MCF 10A (cell line): ENCODE measurements at regions of chr2 and their contacts with region 1.

Region 1: DNA sequence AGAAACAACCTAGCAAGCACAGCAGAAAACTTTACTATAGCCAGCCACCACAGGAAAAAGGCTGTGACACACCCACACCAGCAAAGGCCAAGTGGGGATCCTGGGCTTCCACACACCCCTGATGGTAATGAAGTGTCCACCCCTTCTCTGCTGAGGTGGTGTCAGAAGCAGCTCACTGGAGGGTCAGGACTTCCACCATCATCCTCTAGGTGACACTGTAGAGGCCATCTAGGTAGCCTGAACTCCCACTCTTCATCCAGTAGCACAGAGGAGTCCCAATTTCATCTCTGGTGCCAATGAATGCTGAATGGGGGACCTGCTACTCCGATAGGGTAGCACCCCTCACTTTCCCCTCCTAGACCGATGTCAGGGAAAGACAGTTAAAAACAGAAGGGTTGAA is 1544.4 kb downstream of the LRP1B start:
- DNase-seq: peak; percentile 60
- H3K4me3 Mint-ChIP-seq: no peak overlapping the region
- H3K27ac Mint-ChIP-seq: no peak overlapping the region
- H3K4me1 Mint-ChIP-seq: no peaks in the 10 kb centered on the region
- H3K27me3 Mint-ChIP-seq: peaks cover 64% of the 10 kb centered on the region
- CTCF ChIP-seq: peak; percentile 53

Region 2: DNA sequence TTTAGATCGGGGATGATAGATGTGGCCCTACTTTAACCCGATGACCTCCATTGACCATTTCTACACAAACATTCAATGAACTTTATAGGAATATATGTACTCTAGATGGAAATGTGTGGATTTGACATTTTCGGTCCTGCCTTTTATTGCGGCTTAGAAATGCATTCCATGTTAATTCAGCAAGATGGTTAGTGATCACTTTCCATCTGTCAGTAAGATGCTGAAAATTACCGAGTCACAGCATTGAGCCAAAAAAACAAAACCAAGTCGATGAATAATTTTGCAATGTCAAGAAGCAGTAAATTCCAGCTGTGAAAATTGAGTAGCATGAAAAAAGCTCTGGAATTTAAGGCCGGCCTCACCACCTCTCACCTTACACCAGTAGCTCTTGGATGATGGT is 163.6 kb before region 1 on chr2:
- CTCF ChIA-PET with region 1: no interaction called
- POLR2A ChIA-PET with region 1: no interaction called
- intact Hi-C with region 1: no loop called
- DNase-seq: no peak
- H3K4me3 Mint-ChIP-seq: no peak overlapping the region
- H3K27ac Mint-ChIP-seq: no peak overlapping the region
- H3K4me1 Mint-ChIP-seq: no peaks in the 10 kb centered on the region
- H3K27me3 Mint-ChIP-seq: peaks cover 19% of the 10 kb centered on the region
- CTCF ChIP-seq: no peak

Region 3: DNA sequence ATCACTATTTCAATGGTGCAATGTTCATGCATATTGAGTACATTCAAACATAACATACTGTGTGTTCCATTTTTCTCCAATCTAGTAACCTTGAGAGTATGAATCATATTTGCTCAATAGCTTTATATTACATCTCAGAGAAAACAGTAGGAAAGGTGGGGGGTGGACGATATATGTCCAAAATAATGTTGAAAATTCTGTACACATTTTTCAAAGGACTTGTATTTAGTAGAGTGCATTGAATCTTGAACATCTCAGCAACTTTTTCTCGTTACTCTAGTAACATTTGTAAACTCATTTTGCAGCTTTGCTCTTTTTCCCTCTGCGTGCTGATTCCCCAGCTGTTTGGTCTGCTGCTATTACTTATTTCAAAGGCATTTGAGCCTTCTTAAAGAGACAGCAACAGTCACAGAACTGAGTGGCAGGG is 57.4 kb after region 1 on chr2:
- CTCF ChIA-PET with region 1: no interaction called
- POLR2A ChIA-PET with region 1: no interaction called
- intact Hi-C with region 1: no loop called
- DNase-seq: peak; percentile 5
- H3K4me3 Mint-ChIP-seq: peak overlapping the region; percentile 31
- H3K27ac Mint-ChIP-seq: no peak overlapping the region
- H3K4me1 Mint-ChIP-seq: peaks cover 6% of the 10 kb centered on the region
- H3K27me3 Mint-ChIP-seq: peaks cover 11% of the 10 kb centered on the region
- CTCF ChIP-seq: no peak

Region 4: GRCh38 chr2:141399270-141399669 is 812.9 kb after region 1 on chr2:
- CTCF ChIA-PET with region 1: no interaction called
- POLR2A ChIA-PET with region 1: no interaction called
- intact Hi-C with region 1: loop called (anchors 1 kb)
- DNase-seq: peak; percentile 35
- H3K4me3 Mint-ChIP-seq: no peak overlapping the region
- H3K27ac Mint-ChIP-seq: no peak overlapping the region
- H3K4me1 Mint-ChIP-seq: no peaks in the 10 kb centered on the region
- H3K27me3 Mint-ChIP-seq: peaks cover 17% of the 10 kb centered on the region
- CTCF ChIP-seq: peak; percentile 64

Region 5: GRCh38 chr2:141554810-141555209 is 968.4 kb after region 1 on chr2:
- CTCF ChIA-PET with region 1: no interaction called
- POLR2A ChIA-PET with region 1: no interaction called
- intact Hi-C with region 1: loop called (anchors 10 kb)
- DNase-seq: peak; percentile 50
- H3K4me3 Mint-ChIP-seq: no peak overlapping the region
- H3K27ac Mint-ChIP-seq: no peak overlapping the region
- H3K4me1 Mint-ChIP-seq: peaks cover 7% of the 10 kb centered on the region
- H3K27me3 Mint-ChIP-seq: peaks cover 13% of the 10 kb centered on the region
- CTCF ChIP-seq: peak; percentile 44

Region 6: GRCh38 chr2:141911485-141912066 is 1325.2 kb after region 1 on chr2:
- CTCF ChIA-PET with region 1: interaction called, 3 read pairs
- POLR2A ChIA-PET with region 1: no interaction called
- intact Hi-C with region 1: loop called (anchors 10 kb)
- DNase-seq: peak; percentile 56
- H3K4me3 Mint-ChIP-seq: no peak overlapping the region
- H3K27ac Mint-ChIP-seq: no peak overlapping the region
- H3K4me1 Mint-ChIP-seq: no peaks in the 10 kb centered on the region
- H3K27me3 Mint-ChIP-seq: peaks cover 53% of the 10 kb centered on the region
- CTCF ChIP-seq: peak; percentile 44